AG04449 (cell line): ENCODE measurements at regions of chr12 and their contacts with region 1.

Region 1: GRCh38 chr12:50504798-50505385 is at the start of gene DIP2B:
- DNase-seq: no peak
- H3K4me3 ChIP-seq: peak within 1 kb of the TSS; percentile 77
- CTCF ChIP-seq: peak; percentile 94

Region 2: DNA sequence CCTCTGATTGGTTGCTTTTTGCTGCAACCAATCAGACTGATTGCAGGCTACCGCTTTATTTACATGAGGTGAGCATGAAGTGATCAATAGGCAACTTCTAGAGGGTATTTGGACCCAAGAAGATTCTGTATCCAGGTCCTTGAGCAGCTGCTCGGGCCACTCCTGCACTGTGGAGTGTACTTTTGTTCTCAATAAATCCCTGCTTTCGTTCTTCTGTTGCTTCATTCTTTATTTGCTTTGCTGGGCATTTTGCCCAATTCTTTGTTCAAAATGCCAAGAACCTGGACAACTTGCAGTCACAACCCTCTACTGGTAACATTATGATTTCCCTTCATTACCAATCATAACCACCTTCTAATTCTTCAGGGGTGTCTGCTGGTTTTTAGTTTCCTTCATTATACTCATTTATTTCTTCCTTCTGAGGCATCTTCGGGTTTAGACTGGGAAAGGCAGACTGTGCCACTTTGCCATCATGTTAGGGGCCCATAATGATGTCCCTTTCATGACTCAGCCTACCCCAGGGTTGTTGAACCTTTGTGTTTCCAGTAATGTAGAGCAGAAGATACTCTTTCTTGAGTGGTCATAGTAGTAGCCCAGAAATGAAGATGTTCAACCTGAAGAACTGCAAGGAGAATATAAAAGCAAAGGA is 178.1 kb before region 1 on chr12:
- CTCF ChIA-PET with region 1: no interaction called
- POLR2A ChIA-PET with region 1: no interaction called
- DNase-seq: no peak
- H3K4me3 ChIP-seq: no peak overlapping the region
- CTCF ChIP-seq: no peak

Region 3: DNA sequence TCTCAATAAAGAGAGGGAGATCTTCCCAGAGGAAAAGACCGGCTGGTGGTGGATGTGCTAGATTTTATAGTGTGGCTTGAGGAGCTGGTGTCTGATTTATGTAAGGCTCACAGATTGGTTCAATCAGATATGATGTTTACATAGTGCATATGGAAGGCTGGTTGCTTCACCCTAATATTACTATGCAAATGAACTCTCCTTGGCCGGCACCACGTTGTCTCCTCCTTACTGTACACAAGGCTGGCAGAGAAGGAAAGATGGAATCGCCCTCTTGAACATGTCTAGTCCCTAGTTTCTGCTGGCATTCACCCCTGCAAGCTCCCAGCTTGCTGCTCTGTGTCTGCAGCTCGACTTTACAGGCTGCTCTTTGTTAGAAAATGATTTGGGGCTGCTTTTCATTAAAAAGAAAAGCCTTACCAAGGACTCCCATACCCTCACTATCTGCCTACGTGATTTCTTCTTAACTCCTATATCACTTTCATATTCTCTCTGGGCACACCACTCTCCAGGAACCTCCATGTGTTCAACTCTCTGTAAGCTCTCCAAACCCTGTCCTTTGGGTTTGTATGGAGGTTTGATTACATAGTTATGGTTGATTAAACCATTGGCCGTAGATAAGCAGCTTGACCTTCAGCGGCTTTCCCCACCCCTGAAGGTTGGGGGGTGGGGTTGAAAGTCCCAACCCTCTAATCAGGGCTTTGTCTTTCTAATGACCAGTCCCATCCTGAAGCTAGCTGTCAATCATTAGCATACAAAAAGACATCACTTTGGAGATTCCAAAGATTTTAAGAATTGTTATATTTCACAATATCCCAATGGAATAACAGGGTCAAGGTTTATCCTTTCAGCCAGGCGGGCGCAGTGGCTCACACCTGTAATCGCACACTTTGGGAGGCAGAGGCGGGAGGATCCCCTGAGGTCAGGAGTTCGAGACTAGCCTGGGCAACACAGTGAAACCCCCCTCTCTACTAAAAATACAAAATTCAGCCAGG is 117.1 kb before region 1 on chr12:
- CTCF ChIA-PET with region 1: no interaction called
- POLR2A ChIA-PET with region 1: no interaction called
- DNase-seq: no peak
- H3K4me3 ChIP-seq: no peak overlapping the region
- CTCF ChIP-seq: no peak

Region 4: GRCh38 chr12:50488801-50489200 is 16.1 kb before region 1 on chr12:
- CTCF ChIA-PET with region 1: interaction called, 39 read pairs
- POLR2A ChIA-PET with region 1: no interaction called
- DNase-seq: no peak
- H3K4me3 ChIP-seq: no peak overlapping the region
- CTCF ChIP-seq: no peak

Region 5: GRCh38 chr12:50533203-50533584 is 28.3 kb after region 1 on chr12:
- CTCF ChIA-PET with region 1: interaction called, 11 read pairs
- POLR2A ChIA-PET with region 1: no interaction called
- DNase-seq: no peak
- H3K4me3 ChIP-seq: no peak overlapping the region
- CTCF ChIP-seq: no peak

Region 6: DNA sequence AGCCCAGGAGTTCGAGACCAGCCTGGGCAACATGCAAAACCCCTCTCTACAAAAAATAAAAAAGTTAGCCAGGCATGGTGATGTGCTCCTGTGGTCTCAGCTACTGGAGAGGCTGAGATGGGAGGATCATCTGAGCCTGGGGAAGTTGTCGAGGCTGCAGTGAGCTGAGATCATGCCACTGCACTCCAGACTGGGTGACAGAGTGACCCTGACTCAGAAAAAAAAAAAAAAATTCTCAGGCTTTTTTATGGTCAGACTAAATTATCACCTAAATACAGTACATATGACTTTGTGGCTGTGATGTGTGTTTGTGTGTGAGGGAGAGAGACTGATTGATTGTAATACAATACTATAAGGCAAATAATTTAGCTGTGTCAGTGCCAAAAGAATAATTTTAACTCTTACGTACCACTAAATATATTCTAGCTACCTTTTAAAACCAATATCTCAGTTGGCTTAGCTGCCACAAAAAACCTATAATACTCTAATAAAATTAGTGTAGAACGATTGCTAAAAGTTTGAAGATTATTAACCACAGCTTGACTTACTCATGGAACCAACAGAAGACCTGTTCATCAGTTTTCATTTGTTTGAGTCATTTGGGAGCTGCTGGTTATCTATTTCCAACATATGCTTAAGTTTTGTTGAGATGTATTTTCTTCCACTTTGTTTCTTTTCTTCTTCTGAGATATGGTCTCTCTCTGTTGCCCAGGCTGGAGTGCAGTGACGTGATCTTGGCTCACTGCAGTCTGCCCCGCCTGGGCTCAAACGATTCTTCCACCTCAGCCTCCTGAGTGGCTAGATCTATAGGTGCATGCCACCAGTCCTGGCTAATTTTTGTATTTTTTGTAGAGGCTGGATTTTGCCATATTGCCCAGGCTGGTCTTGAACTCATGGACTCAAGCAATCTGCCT is 57.9 kb after region 1 on chr12:
- CTCF ChIA-PET with region 1: no interaction called
- POLR2A ChIA-PET with region 1: no interaction called
- DNase-seq: no peak
- H3K4me3 ChIP-seq: no peak overlapping the region
- CTCF ChIP-seq: no peak

Region 7: DNA sequence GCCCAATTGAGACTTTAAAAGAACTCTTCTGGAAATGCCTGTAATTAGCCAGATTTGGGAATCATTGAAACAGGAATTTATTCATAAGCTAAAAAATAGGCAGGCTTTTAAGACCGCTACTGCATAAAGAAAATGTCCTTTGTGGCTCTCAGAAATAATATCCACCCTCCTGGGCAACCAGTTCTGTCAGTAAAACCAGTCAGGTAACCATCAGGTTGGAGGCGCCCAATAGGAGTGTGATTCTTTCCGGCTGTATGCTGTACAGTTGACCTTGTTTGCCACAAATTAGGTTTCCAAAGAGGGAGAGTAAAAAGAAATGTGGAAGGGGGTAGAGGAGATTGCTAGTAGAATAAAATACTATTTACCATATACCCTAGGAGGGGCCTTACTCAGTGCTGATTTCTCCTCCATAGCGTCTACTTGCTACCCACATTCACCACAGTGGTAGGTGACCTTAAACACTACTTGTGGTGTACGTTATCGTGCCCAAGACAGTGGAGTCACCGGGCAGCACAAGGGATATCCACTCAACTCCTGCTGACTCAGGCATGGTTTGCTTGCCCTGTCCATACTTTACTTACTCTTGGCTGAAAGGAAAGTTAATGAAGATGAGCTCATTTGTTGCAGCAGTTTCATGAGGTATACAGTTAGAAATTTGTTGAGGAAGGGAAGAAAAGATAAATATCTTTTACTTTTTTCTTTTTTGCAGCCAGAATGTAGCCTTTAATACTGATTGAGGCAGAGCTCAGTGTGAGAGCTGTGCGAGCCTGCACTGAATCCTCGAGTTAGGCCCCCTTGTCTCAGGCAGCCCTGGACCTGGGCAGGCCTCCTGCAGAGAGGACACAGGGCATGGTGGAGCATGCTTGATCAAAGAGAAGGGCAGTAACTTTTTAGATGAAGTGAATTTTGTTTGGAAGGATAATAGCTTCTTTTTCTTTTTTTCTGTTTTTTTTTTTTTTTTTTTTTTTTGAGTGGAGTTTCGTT is 76.6 kb after region 1 on chr12:
- CTCF ChIA-PET with region 1: no interaction called
- POLR2A ChIA-PET with region 1: no interaction called
- DNase-seq: peak; percentile 34
- H3K4me3 ChIP-seq: no peak overlapping the region
- CTCF ChIP-seq: no peak

Region 8: GRCh38 chr12:50637870-50638481 is 133.1 kb after region 1 on chr12:
- CTCF ChIA-PET with region 1: interaction called, 215 read pairs
- POLR2A ChIA-PET with region 1: no interaction called
- DNase-seq: no peak
- H3K4me3 ChIP-seq: no peak overlapping the region
- CTCF ChIP-seq: peak; percentile 7

Region 9: DNA sequence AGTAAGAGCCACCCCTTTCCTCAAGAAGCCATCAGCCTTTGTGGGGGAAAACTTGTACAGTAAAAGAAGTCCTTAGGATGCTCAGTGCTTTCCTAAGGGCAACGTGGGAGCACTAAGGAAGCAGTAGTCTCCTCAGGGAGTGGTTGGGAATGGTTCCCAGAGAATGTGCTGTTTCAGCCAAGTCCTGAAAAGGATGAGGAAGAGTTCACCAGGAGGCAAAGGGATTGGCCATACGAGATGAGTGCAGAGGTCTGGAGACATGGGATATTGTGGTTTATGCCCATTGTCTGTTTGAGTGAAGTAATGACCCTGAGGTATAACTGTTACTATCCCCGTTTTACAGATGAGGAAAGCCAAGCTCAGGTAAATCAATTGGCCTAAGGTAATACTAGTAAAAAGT is 173.0 kb after region 1 on chr12:
- CTCF ChIA-PET with region 1: interaction called, 20 read pairs
- POLR2A ChIA-PET with region 1: no interaction called
- DNase-seq: no peak
- H3K4me3 ChIP-seq: no peak overlapping the region
- CTCF ChIP-seq: no peak

Region 10: DNA sequence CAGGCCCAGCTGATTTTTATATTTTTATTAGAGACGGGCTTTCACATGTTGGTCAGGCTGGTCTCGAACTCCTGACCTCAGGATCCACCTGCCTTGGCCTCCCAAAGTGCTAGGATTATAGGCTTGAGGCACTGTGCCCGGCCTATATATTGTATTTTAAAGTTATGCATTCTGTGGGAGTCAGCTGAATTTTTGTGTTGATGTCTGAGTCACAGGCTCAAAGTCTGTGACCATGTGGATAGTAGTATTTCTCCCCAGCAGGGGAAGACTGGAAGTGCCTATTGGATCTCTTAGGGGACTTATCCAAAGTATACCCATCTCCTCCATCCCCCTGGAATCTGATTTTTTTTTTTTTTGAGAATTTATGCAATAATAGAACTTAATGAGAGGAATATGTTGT is 215.2 kb after region 1 on chr12:
- CTCF ChIA-PET with region 1: interaction called, 22 read pairs
- POLR2A ChIA-PET with region 1: no interaction called
- DNase-seq: no peak
- H3K4me3 ChIP-seq: no peak overlapping the region
- CTCF ChIP-seq: no peak

Region 11: DNA sequence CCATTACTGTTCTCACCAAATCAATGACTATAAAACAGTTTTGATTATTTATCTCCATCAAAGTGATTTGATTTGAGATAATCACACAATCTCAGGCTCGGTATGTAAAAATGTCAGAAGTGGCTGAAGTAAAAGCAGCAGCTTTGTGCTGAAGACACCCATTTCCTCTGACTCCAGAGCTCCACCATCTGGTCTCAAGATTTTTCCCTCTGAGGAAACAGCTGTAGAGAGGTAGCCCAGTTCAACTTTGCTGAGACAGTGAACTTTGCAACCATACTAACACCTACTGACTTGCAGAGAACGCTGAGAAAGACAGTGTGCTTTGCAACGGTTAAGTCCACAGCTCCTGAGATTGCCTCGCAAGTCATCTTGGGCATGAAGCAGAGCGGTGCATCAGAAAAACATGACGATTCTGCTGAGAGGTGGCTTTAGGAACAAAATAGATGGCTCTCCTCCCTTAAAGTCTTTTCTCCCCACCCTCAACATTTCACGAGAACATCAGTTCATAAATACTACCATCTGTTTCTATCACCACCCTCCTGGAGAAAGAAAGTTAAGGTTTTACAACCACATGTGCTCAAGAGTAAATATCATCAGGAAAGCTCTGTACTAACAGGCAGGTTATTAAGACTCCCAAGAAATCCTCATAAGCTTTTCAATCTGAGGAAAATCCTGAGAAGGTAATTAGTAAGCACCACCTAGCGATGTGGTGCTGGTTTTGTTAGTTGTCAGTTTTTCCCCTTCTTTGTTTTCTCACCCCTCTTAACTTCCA is 482.3 kb after region 1 on chr12:
- CTCF ChIA-PET with region 1: interaction called, 15 read pairs
- POLR2A ChIA-PET with region 1: no interaction called
- DNase-seq: no peak
- H3K4me3 ChIP-seq: no peak overlapping the region
- CTCF ChIP-seq: peak; percentile 57